ENCODE measurements at regions of chr17 and their contacts with region 1.

Region 1: DNA sequence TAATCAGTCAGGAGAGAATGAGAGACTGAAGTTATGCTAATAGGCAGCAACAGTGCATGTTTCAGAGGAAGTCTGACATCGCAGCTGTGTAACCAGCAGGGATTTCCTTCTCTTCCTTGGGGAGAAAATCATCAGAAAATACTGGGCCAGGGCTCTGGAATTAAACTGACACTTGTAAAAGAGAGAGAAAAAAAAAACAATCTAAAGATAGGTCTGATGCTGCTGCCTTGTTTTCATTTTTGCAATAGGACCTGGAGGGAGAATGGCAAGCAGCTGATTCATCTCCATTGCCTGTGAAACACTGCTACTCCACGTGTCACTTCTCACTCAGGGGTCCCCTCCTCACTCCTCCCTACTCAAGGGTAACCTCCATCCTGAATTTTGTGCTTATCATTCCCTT is 17.7 kb upstream of the CORO6 start:
- DNase-seq: no peak
- H3K4me3 ChIP-seq: no peak overlapping the region
- H3K4me3 Mint-ChIP-seq: no peak overlapping the region
- H3K27ac ChIP-seq: peak overlapping the region in 1 of 2 donors; percentile 34
- H3K27ac Mint-ChIP-seq: peak overlapping the region in 6 of 7 donors; percentile 0 to 90 (median 82)
- H3K4me1 ChIP-seq: peaks cover 7 to 9% of the 10 kb centered on the region in 2 donors
- H3K4me1 Mint-ChIP-seq: peaks cover 24% of the 10 kb centered on the region
- H3K27me3 ChIP-seq: no peaks in the 10 kb centered on the region
- H3K27me3 Mint-ChIP-seq: no peaks in the 10 kb centered on the region
- CTCF ChIP-seq: no peak

Region 2: GRCh38 chr17:29607557-29608420 is 32.6 kb before region 1 on chr17:
- intact Hi-C with region 1: no loop called
- DNase-seq: no peak
- H3K4me3 ChIP-seq: no peak overlapping the region
- H3K4me3 Mint-ChIP-seq: no peak overlapping the region
- H3K27ac ChIP-seq: no peak overlapping the region
- H3K27ac Mint-ChIP-seq: no peak overlapping the region
- H3K4me1 ChIP-seq: peaks cover under 1 to 3% of the 10 kb centered on the region in 2 donors
- H3K4me1 Mint-ChIP-seq: no peaks in the 10 kb centered on the region
- H3K27me3 ChIP-seq: peaks cover 0 to 7% of the 10 kb centered on the region in 2 donors
- H3K27me3 Mint-ChIP-seq: peaks cover 5 to 8% (median 8%) of the 10 kb centered on the region in 3 donors
- CTCF ChIP-seq: no peak

Region 3: DNA sequence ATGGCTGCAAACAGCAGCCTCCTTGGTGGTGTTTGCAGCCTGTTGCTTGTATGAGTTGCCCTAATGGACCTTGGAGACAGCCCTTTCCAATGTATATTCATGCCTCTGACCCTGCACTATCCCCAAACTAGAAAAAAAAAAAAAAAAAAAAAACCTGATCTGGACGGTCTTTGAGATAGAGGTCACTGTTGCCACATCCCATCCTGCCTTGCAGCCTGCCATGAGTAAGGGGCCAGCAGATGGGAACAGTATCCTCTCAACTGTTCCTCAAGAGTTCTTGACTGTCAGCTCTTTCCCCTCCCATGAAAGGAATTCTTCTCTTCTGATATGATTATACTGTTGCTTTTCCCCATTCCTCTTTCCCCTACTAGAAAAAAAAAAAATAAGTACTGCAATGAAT is 137.2 kb after region 1 on chr17:
- intact Hi-C with region 1: loop called (anchors 5 to 10 kb)
- DNase-seq: no peak
- H3K4me3 ChIP-seq: no peak overlapping the region
- H3K4me3 Mint-ChIP-seq: no peak overlapping the region
- H3K27ac ChIP-seq: no peak overlapping the region
- H3K27ac Mint-ChIP-seq: peak overlapping the region in 1 of 7 donors; percentile 70
- H3K4me1 ChIP-seq: peaks cover 5 to 7% of the 10 kb centered on the region in 2 donors
- H3K4me1 Mint-ChIP-seq: peaks cover 13% of the 10 kb centered on the region
- H3K27me3 ChIP-seq: no peaks in the 10 kb centered on the region
- H3K27me3 Mint-ChIP-seq: peaks cover 0 to 4% (median 0%) of the 10 kb centered on the region in 3 donors
- CTCF ChIP-seq: no peak